ENCODE measurements at regions of chr6 and their contacts with region 1.

Region 1: GRCh38 chr6:38702558-38703397 is at the start of gene GLO1:
- DNase-seq: peak; percentile 98
- ATAC-seq: peak; percentile 99
- H3K4me3 ChIP-seq: peak within 1 kb of the TSS; percentile 89
- H3K27ac ChIP-seq: peak within 1 kb of the TSS; percentile 20
- H3K4me1 ChIP-seq: no peaks in the 10 kb centered on the region; the same call in 1 of the 2 replicates
- H3K27me3 ChIP-seq: no peaks in the 10 kb centered on the region
- CTCF ChIP-seq: no peak
- total RNA-seq, gene GLO1: 194 and 233 TPM in 2 replicates

Region 2: DNA sequence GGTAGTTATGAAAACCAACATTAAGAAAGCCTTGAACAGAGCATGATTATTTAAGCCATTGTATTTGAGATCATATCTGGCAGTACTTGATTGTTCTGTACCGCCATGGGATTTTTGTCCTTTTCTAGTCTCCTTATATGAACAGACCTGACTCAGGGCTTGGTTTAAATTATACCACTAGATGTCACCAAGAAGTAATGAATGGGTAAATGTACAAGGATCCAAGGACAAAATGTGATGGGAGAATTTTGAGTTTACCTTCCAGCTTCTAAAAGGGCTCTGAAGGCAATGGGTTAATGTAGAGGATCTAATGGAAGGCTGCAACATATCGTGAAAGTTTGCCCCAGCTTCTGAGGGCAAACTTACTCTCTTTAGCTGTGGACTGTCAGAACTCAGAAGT is 1337.0 kb before region 1 on chr6:
- CTCF ChIA-PET with region 1: no interaction called
- POLR2A ChIA-PET with region 1: interaction called, 22 read pairs
- intact Hi-C with region 1: no loop called
- DNase-seq: peak; percentile 23
- ATAC-seq: peak; percentile 49
- H3K4me3 ChIP-seq: no peak overlapping the region
- H3K27ac ChIP-seq: no peak overlapping the region
- H3K4me1 ChIP-seq: peaks cover 31% of the 10 kb centered on the region
- H3K27me3 ChIP-seq: no peaks in the 10 kb centered on the region
- CTCF ChIP-seq: peak; percentile 55; the same call in 1 of the 2 replicates

Region 3: GRCh38 chr6:38686270-38687042 is 16.3 kb before region 1 on chr6:
- CTCF ChIA-PET with region 1: no interaction called
- POLR2A ChIA-PET with region 1: interaction called, 14 read pairs
- intact Hi-C with region 1: no loop called
- DNase-seq: no peak
- ATAC-seq: no peak
- H3K4me3 ChIP-seq: no peak overlapping the region
- H3K27ac ChIP-seq: no peak overlapping the region
- H3K4me1 ChIP-seq: no peaks in the 10 kb centered on the region
- H3K27me3 ChIP-seq: no peaks in the 10 kb centered on the region
- CTCF ChIP-seq: no peak

Region 4: GRCh38 chr6:38784506-38785235 is 81.9 kb after region 1 on chr6:
- CTCF ChIA-PET with region 1: no interaction called
- POLR2A ChIA-PET with region 1: interaction called, 13 read pairs
- intact Hi-C with region 1: no loop called
- DNase-seq: no peak
- ATAC-seq: no peak
- H3K4me3 ChIP-seq: no peak overlapping the region
- H3K27ac ChIP-seq: no peak overlapping the region
- H3K4me1 ChIP-seq: peaks cover 10% of the 10 kb centered on the region
- H3K27me3 ChIP-seq: no peaks in the 10 kb centered on the region
- CTCF ChIP-seq: no peak

Region 5: DNA sequence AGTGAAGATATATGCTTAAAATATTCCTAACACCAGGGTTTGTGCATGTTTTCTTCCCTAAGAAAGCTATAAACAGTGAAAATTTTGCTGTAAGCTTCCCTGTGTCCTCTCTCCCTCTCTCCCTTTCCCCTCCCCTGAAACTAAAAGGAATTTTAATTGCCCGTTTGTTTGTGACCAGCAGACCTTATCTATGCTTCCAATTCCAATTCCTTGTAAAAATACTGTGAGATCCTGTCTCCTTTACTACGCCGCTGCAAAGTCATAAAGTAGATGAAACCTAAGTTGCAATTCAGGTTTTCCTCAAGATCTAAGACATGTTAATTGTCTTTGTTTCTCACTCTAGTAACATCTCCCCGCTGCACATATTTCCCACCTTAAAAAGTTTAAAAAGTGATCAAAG is 94.6 kb after region 1 on chr6:
- CTCF ChIA-PET with region 1: no interaction called
- POLR2A ChIA-PET with region 1: interaction called, 7 read pairs
- intact Hi-C with region 1: loop called (anchors 1 kb)
- DNase-seq: peak; percentile 71
- ATAC-seq: peak; percentile 18
- H3K4me3 ChIP-seq: peak overlapping the region; percentile 58; the same call in 1 of the 2 replicates
- H3K27ac ChIP-seq: peak overlapping the region; percentile 89
- H3K4me1 ChIP-seq: peaks cover 67% of the 10 kb centered on the region
- H3K27me3 ChIP-seq: no peaks in the 10 kb centered on the region
- CTCF ChIP-seq: no peak

Region 6: GRCh38 chr6:39020124-39020523 is 317.3 kb after region 1 on chr6:
- CTCF ChIA-PET with region 1: interaction called, 10 read pairs
- POLR2A ChIA-PET with region 1: no interaction called
- intact Hi-C with region 1: no loop called
- DNase-seq: peak; percentile 6
- ATAC-seq: no peak
- H3K4me3 ChIP-seq: no peak overlapping the region
- H3K27ac ChIP-seq: no peak overlapping the region
- H3K4me1 ChIP-seq: no peaks in the 10 kb centered on the region
- H3K27me3 ChIP-seq: peaks cover 73% of the 10 kb centered on the region
- CTCF ChIP-seq: no peak